Panc1 (cell line): ENCODE measurements at regions of chr17 and their contacts with region 1.

Region 1: DNA sequence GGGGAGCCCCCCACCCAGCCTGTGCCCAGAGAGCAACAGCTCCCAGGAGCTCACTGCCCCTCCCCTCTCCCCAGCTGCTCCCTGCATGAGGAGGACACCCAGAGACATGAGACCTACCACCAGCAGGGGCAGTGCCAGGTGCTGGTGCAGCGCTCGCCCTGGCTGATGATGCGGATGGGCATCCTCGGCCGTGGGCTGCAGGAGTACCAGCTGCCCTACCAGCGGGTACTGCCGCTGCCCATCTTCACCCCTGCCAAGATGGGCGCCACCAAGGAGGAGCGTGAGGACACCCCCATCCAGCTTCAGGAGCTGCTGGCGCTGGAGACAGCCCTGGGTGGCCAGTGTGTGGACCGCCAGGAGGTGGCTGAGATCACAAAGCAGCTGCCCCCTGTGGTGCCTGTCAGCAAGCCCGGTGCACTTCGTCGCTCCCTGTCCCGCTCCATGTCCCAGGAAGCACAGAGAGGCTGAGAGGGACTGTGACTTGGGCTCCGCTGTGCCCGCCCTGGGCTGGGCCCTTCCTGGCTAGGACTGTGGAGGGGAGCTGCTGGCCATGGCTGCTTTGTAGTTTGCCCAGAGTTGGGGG is 584 bp downstream of the TCAP start:
- DNase-seq: no peak
- ATAC-seq: peak; percentile 44
- H3K4me3 ChIP-seq: no peak overlapping the region
- H3K27ac ChIP-seq: peak overlapping the region; percentile 59; the same call in 1 of the 2 replicates
- H3K4me1 ChIP-seq: peaks cover 46% of the 10 kb centered on the region
- H3K27me3 ChIP-seq: no peaks in the 10 kb centered on the region
- CTCF ChIP-seq: no peak; the same call in 1 of the 2 replicates

Region 2: GRCh38 chr17:39687811-39688518 is 22.2 kb after region 1 on chr17 and contains the start of gene PGAP3:
- CTCF ChIA-PET with region 1: interaction called, 6 read pairs
- POLR2A ChIA-PET with region 1: interaction called, 16 read pairs
- in situ Hi-C with region 1: no loop called
- intact Hi-C with region 1: no loop called
- DNase-seq: peak; percentile 50
- ATAC-seq: peak; percentile 98
- H3K4me3 ChIP-seq: peak within 1 kb of the TSS; percentile 56 to 78
- H3K27ac ChIP-seq: peak within 1 kb of the TSS; percentile 83
- H3K4me1 ChIP-seq: 0 out of 2 replicates have a peak, but pooled peaks cover 3% of the 10 kb centered on the region
- H3K27me3 ChIP-seq: no peaks in the 10 kb centered on the region
- CTCF ChIP-seq: no peak
- total RNA-seq, gene PGAP3: 21.8 TPM

Region 3: GRCh38 chr17:39730095-39730921 is 64.6 kb after region 1 on chr17 and contains the start of gene MIEN1:
- CTCF ChIA-PET with region 1: no interaction called
- POLR2A ChIA-PET with region 1: no interaction called
- in situ Hi-C with region 1: no loop called
- intact Hi-C with region 1: no loop called
- DNase-seq: no peak
- ATAC-seq: peak; percentile 96
- H3K4me3 ChIP-seq: peak within 1 kb of the TSS; percentile 73 to 96
- H3K27ac ChIP-seq: peak within 1 kb of the TSS; percentile 93
- H3K4me1 ChIP-seq: 0 out of 2 replicates have a peak, but pooled peaks cover 5% of the 10 kb centered on the region
- H3K27me3 ChIP-seq: no peaks in the 10 kb centered on the region
- CTCF ChIP-seq: peak; percentile 96
- total RNA-seq, gene MIEN1: 103 TPM